ENCODE measurements at regions of chr13 and their contacts with region 1.

Region 1: GRCh38 chr13:80342471-80343380 is 1.8 kb upstream of the SPRY2 start:
- DNase-seq: no peak
- ATAC-seq: peak; percentile 51
- H3K4me3 ChIP-seq: peak overlapping the region; percentile 43; the same call in 1 of the 2 replicates
- H3K27ac ChIP-seq: no peak overlapping the region
- H3K4me1 ChIP-seq: no peaks in the 10 kb centered on the region
- H3K27me3 ChIP-seq: no peaks in the 10 kb centered on the region; a peak in 1 of 4 replicates
- CTCF ChIP-seq: peak; percentile 91 to 95 (median 94)
- EP300 ChIP-seq: no peak
- POLR2A ChIP-seq: no peak
- RAD21 ChIP-seq: peak; percentile 83

Region 2: GRCh38 chr13:79775830-79776229 is 566.9 kb before region 1 on chr13:
- CTCF ChIA-PET with region 1: interaction called, 8 read pairs
- POLR2A ChIA-PET with region 1: interaction called, 3 read pairs
- RAD21 ChIA-PET with region 1: interaction called, 31 read pairs
- SMC1A ChIA-PET with region 1: interaction called, 14 read pairs
- in situ Hi-C with region 1: no loop called
- intact Hi-C with region 1: loop called (anchors 5 kb)
- DNase-seq: no peak
- ATAC-seq: peak; percentile 86
- H3K4me3 ChIP-seq: no peak overlapping the region
- H3K27ac ChIP-seq: no peak overlapping the region
- H3K4me1 ChIP-seq: no peaks in the 10 kb centered on the region
- H3K27me3 ChIP-seq: no peaks in the 10 kb centered on the region
- CTCF ChIP-seq: peak; percentile 60 to 78 (median 65)
- EP300 ChIP-seq: no peak
- POLR2A ChIP-seq: no peak
- RAD21 ChIP-seq: peak; percentile 94

Region 3: GRCh38 chr13:80048802-80049201 is 293.9 kb before region 1 on chr13:
- CTCF ChIA-PET with region 1: interaction called, 6 read pairs
- POLR2A ChIA-PET with region 1: interaction called, 4 read pairs
- RAD21 ChIA-PET with region 1: interaction called, 43 read pairs
- SMC1A ChIA-PET with region 1: interaction called, 19 read pairs
- in situ Hi-C with region 1: no loop called
- intact Hi-C with region 1: no loop called
- DNase-seq: peak; percentile 89
- ATAC-seq: peak; percentile 98
- H3K4me3 ChIP-seq: no peak overlapping the region
- H3K27ac ChIP-seq: peak overlapping the region; percentile 18; the same call in 1 of the 2 replicates
- H3K4me1 ChIP-seq: peaks cover 21% of the 10 kb centered on the region
- H3K27me3 ChIP-seq: no peaks in the 10 kb centered on the region
- CTCF ChIP-seq: no peak
- EP300 ChIP-seq: peak; percentile 94 to 98
- POLR2A ChIP-seq: no peak
- RAD21 ChIP-seq: no peak

Region 4: GRCh38 chr13:80276371-80277289 is 66.1 kb before region 1 on chr13:
- CTCF ChIA-PET with region 1: no interaction called
- POLR2A ChIA-PET with region 1: no interaction called
- RAD21 ChIA-PET with region 1: interaction called, 4 read pairs
- SMC1A ChIA-PET with region 1: interaction called, 3 read pairs
- in situ Hi-C with region 1: no loop called
- intact Hi-C with region 1: loop called (anchors 2 kb)
- DNase-seq: no peak
- ATAC-seq: peak; percentile 91
- H3K4me3 ChIP-seq: no peak overlapping the region
- H3K27ac ChIP-seq: no peak overlapping the region
- H3K4me1 ChIP-seq: peaks cover 4% of the 10 kb centered on the region
- H3K27me3 ChIP-seq: no peaks in the 10 kb centered on the region
- CTCF ChIP-seq: no peak
- EP300 ChIP-seq: peak in 1 of 2 experiments; percentile 29; a peak in 2 of 4 replicates
- POLR2A ChIP-seq: no peak
- RAD21 ChIP-seq: no peak

Region 5: DNA sequence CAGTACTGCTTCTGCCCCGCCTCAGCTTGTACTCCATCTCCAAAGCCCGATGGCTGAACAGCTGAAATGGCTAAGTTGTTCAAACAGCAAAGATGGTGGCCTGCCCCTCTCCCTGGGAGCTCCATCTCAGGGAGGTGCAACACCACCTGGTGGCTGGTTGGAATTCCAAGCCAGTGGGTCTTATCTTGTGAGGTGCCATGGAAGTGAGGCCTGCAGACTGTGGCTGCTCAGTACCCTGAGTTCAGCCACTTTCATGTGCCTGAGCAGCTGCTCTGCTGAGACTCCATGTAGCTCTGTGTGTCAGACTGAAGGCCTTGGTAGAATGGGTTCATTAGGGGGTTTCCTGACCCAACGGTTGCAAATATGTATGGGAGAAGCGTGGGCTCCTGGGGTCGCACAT is 65.5 kb after region 1 on chr13:
- CTCF ChIA-PET with region 1: interaction called, 30 read pairs
- POLR2A ChIA-PET with region 1: interaction called, 5 read pairs
- RAD21 ChIA-PET with region 1: interaction called, 111 read pairs
- SMC1A ChIA-PET with region 1: interaction called, 84 read pairs
- in situ Hi-C with region 1: no loop called
- intact Hi-C with region 1: no loop called
- DNase-seq: no peak
- ATAC-seq: peak; percentile 75
- H3K4me3 ChIP-seq: no peak overlapping the region
- H3K27ac ChIP-seq: no peak overlapping the region
- H3K4me1 ChIP-seq: no peaks in the 10 kb centered on the region
- H3K27me3 ChIP-seq: no peaks in the 10 kb centered on the region
- CTCF ChIP-seq: 0 out of 6 replicates have a peak, but pooled peaks of 1 of the 3 experiments have one; percentile 17
- EP300 ChIP-seq: no peak
- POLR2A ChIP-seq: no peak
- RAD21 ChIP-seq: no peak

Region 6: DNA sequence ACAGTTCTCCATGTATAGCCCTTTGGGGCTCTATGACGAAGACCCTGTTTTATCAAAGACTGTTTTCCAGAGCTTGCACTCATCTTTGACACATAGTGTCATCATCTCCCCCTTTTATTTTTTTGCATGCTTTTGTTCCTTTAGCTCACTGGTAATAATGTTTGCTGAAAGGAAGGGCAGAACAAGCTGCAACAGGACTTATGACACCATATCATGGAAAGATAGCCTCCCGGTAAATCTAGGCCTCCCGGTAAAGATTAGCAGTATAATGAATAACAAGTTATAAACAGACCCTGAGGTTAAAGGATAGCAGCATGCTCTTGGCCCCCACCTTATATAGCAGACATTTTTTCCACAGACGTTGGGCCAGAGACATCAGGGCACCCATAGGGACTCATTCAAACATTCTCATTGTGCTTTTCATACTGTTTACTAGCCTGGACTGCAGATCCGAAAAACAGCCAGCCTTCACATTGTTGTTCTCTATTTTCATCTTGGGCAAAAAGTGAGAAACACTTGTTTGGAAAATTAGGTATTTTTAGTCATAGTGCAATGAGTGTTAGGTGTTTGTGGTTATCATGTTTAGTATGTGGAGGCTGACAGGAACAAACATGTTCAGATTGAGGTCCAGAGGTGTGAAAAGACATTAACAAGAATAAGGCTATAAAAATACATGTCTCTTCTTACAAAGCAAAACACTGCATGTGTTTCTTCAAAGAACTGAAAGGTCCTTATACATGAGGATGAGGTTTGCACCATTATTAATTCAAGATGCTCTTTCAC is 135.1 kb after region 1 on chr13:
- CTCF ChIA-PET with region 1: interaction called, 12 read pairs
- POLR2A ChIA-PET with region 1: interaction called, 3 read pairs
- RAD21 ChIA-PET with region 1: interaction called, 26 read pairs
- SMC1A ChIA-PET with region 1: interaction called, 5 read pairs
- in situ Hi-C with region 1: no loop called
- intact Hi-C with region 1: no loop called
- DNase-seq: no peak
- ATAC-seq: peak; percentile 80
- H3K4me3 ChIP-seq: no peak overlapping the region
- H3K27ac ChIP-seq: no peak overlapping the region
- H3K4me1 ChIP-seq: no peaks in the 10 kb centered on the region
- H3K27me3 ChIP-seq: no peaks in the 10 kb centered on the region
- CTCF ChIP-seq: no peak
- EP300 ChIP-seq: peak; percentile 93 to 96
- POLR2A ChIP-seq: no peak
- RAD21 ChIP-seq: no peak